ENCODE measurements at regions of chr10 and their contacts with region 1.

Region 1: GRCh38 chr10:75111367-75111906 is at the start of gene SAMD8:
- DNase-seq: peak; percentile 98 to 99
- ATAC-seq: peak; percentile 75 to 80 (median 76)
- H3K4me3 ChIP-seq: peak within 1 kb of the TSS; percentile 88
- H3K27ac ChIP-seq: peak within 1 kb of the TSS; percentile 99
- H3K4me1 ChIP-seq: peaks cover 62% of the 10 kb centered on the region
- H3K27me3 ChIP-seq: no peaks in the 10 kb centered on the region
- CTCF ChIP-seq: peak; percentile 48
- total RNA-seq, gene SAMD8: 30.0 to 44.2 (median 35.7) TPM

Region 2: DNA sequence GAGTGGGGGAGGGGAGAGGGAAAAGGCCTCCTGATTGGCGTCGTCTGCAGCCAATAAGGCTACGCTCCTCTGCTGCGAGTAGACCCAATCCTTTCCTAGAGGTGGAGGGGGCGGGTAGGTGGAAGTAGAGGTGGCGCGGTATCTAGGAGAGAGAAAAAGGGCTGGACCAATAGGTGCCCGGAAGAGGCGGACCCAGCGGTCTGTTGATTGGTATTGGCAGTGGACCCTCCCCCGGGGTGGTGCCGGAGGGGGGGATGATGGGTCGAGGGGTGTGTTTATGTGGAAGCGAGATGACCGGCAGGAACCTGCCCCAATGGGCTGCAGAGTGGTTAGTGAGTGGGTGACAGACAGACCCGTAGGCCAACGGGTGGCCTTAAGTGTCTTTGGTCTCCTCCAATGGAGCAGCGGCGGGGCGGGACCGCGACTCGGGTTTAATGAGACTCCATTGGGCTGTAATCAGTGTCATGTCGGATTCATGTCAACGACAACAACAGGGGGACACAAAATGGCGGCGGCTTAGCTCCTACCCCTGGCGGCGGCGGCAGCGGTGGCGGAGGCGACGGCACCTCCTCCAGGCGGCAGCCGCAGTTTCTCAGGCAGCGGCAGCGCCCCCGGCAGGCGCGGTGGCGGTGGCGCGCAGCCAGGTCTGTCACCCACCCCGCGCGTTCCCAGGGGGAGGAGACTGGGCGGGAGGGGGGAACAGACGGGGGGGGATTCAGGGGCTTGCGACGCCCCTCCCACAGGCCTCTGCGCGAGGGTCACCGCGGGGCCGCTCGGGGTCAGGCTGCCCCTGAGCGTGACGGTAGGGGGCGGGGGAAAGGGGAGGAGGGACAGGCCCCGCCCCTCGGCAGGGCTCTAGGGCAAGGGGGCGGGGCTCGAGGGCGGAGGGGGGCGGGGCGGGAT is 285.0 kb before region 1 on chr10 and contains the start of gene KAT6B:
- intact Hi-C with region 1: loop called in 1 of 2 experiments (anchors 5 kb)
- DNase-seq: peak; percentile 100
- ATAC-seq: peak; percentile 86 to 91 (median 87)
- H3K4me3 ChIP-seq: peak within 1 kb of the TSS; percentile 95
- H3K27ac ChIP-seq: peak within 1 kb of the TSS; percentile 97
- H3K4me1 ChIP-seq: peaks cover 49% of the 10 kb centered on the region
- H3K27me3 ChIP-seq: no peaks in the 10 kb centered on the region
- CTCF ChIP-seq: peak; percentile 17
- total RNA-seq, gene KAT6B: 16.9 to 21.3 (median 18.8) TPM

Region 3: GRCh38 chr10:74871595-74872382 is 239.6 kb before region 1 on chr10:
- intact Hi-C with region 1: no loop called
- DNase-seq: no peak
- ATAC-seq: no peak
- H3K4me3 ChIP-seq: no peak overlapping the region
- H3K27ac ChIP-seq: no peak overlapping the region
- H3K4me1 ChIP-seq: peaks cover 25% of the 10 kb centered on the region
- H3K27me3 ChIP-seq: no peaks in the 10 kb centered on the region
- CTCF ChIP-seq: no peak

Region 4: DNA sequence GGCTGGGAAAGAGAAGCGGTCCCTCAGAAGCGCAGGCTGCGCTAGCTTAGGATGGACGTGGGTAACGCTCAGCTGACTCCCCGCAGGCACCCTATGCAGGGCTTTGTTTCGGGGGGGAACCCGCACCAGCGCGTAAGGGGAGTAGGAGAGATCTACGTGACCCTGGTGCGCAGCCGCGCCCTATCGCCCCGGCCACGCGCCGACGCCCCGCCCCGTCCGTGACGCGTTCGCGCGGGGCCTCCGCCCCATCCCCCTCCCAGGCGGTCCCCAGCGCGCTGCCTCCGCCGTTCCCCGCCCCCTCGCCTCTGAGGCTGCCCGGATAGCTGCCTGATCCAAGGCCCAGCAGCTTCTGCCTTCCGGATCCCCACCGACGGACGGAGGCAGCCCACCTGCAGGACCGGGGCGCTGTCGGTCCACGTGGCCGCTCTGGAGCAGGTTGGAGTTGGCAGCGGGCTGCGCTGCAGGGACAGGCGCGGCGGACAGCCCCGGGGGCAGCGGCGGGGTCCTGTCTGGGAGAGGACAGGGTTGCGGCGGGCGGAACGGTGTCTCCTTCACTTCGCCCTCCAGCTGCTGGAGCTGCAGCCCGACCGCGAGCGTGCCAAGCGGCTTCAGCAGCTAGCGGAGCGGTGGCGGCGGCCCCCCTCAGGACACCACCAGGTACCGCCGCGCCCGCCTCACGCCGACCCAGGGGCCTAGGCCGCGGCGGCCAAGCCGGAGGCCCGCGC is 99.0 kb after region 1 on chr10 and contains the start of gene VDAC2:
- intact Hi-C with region 1: loop called (anchors 2 to 5 kb)
- DNase-seq: peak; percentile 92 to 97
- ATAC-seq: peak; percentile 94 to 97 (median 95)
- H3K4me3 ChIP-seq: peak within 1 kb of the TSS; percentile 97
- H3K27ac ChIP-seq: peak within 1 kb of the TSS; percentile 100
- H3K4me1 ChIP-seq: peaks cover 55% of the 10 kb centered on the region
- H3K27me3 ChIP-seq: no peaks in the 10 kb centered on the region
- CTCF ChIP-seq: no peak
- total RNA-seq, gene VDAC2: 314 to 546 (median 399) TPM

Region 5: DNA sequence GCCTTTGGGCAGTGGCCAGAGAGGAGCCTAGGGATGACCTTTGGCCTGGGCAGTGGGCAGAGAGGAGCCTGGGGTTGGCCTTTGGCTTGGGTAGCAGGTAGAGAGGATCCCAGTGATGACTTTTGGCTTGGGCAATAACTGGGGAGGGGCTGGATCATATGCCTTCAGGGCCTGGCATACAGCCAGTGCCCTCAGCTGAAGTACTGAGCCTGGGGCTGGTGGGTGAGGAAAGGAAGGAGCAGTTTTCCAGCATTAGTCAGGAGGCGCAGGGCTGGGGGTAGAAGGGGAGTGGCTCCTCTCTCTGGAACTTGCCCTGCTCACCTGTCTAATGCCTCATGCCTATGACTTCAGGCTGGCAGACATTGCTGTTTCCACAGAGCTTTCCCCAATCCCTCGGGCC is 139.5 kb after region 1 on chr10:
- intact Hi-C with region 1: no loop called
- DNase-seq: no peak
- ATAC-seq: no peak
- H3K4me3 ChIP-seq: no peak overlapping the region
- H3K27ac ChIP-seq: no peak overlapping the region
- H3K4me1 ChIP-seq: no peaks in the 10 kb centered on the region
- H3K27me3 ChIP-seq: no peaks in the 10 kb centered on the region
- CTCF ChIP-seq: no peak

Measured in psoas muscle (tissue), 8 donors.